ENCODE measurements at regions of chr12 and their contacts with region 1.

Region 1: DNA sequence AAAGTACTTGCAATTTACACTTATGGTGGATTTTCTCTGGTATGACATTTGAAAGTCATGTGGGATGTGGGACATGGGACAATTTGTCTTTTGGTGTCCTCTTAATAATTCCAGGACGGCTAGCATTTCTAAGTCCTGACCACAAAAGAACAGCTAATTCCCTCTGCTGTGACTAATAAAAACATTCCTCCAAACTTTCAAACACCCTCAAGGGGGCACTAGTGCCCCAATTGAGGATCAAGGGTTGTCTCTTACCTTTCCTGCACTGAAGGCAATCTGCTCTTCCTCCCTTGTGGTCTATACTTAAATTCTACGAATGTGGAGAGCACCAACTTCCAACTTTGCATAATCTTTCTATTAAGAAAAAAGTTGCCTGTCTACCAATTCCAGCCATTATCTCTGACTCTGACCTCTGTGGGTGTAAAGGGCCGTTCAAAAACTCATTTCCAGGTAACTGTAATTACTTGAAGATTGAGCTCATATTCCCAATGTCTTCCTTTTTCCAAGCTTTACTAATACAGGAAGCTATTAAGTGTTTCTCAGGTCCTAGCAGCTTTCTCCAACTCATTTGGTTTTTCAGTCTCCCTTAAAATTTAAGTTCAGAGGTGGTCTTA is 210.2 kb downstream of the PTPRO start:
- DNase-seq: peak; percentile 71
- H3K4me3 Mint-ChIP-seq: no peak overlapping the region
- H3K27ac Mint-ChIP-seq: no peak overlapping the region
- H3K4me1 Mint-ChIP-seq: no peaks in the 10 kb centered on the region
- H3K27me3 Mint-ChIP-seq: peaks cover 12% of the 10 kb centered on the region

Region 2: GRCh38 chr12:15546102-15546701 is 13.7 kb after region 1 on chr12:
- CTCF ChIA-PET with region 1: interaction called, 10 read pairs
- POLR2A ChIA-PET with region 1: no interaction called
- DNase-seq: peak; percentile 67
- H3K4me3 Mint-ChIP-seq: peak overlapping the region; percentile 40
- H3K27ac Mint-ChIP-seq: peak overlapping the region; percentile 97
- H3K4me1 Mint-ChIP-seq: peaks cover 56% of the 10 kb centered on the region
- H3K27me3 Mint-ChIP-seq: no peaks in the 10 kb centered on the region

Region 3: GRCh38 chr12:15575671-15576541 is 43.4 kb after region 1 on chr12:
- CTCF ChIA-PET with region 1: interaction called, 11 read pairs
- POLR2A ChIA-PET with region 1: interaction called, 3 read pairs
- DNase-seq: no peak
- H3K4me3 Mint-ChIP-seq: no peak overlapping the region
- H3K27ac Mint-ChIP-seq: peak overlapping the region; percentile 50
- H3K4me1 Mint-ChIP-seq: peaks cover 43% of the 10 kb centered on the region
- H3K27me3 Mint-ChIP-seq: no peaks in the 10 kb centered on the region

Region 4: DNA sequence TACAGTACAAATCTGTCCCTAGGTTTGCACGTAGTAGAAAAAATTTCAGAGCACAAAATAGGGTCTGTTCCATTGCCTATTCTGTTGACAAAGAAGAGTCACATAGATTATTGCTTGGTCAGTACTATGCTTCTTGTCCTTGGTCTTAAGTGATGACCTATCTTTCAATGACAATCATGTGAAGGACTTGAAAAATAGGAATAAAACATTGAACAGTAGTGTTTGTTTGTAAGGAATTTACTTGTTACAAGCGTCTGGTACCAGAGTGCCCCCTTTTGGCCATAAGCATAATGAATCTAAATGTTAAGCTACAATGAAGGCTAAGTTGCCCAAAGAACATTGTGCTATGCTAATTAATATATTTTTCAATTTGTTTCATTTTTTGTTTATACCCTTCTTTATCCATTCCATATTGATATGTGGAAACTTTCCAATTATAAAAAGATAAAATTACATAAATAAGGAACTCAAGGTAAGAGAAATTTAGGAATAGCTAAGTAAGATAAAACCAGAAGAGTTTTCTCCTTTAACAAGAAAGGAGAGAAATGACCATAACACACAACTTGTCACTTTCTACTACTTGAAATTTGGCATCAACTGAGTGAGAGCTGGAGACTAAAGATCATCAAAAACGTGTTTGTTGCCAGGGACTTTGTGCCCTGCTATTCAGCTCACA is 52.0 kb after region 1 on chr12:
- CTCF ChIA-PET with region 1: interaction called, 88 read pairs
- POLR2A ChIA-PET with region 1: interaction called, 4 read pairs
- DNase-seq: peak; percentile 62
- H3K4me3 Mint-ChIP-seq: no peak overlapping the region
- H3K27ac Mint-ChIP-seq: peak overlapping the region; percentile 72
- H3K4me1 Mint-ChIP-seq: peaks cover 30% of the 10 kb centered on the region
- H3K27me3 Mint-ChIP-seq: no peaks in the 10 kb centered on the region

Region 5: DNA sequence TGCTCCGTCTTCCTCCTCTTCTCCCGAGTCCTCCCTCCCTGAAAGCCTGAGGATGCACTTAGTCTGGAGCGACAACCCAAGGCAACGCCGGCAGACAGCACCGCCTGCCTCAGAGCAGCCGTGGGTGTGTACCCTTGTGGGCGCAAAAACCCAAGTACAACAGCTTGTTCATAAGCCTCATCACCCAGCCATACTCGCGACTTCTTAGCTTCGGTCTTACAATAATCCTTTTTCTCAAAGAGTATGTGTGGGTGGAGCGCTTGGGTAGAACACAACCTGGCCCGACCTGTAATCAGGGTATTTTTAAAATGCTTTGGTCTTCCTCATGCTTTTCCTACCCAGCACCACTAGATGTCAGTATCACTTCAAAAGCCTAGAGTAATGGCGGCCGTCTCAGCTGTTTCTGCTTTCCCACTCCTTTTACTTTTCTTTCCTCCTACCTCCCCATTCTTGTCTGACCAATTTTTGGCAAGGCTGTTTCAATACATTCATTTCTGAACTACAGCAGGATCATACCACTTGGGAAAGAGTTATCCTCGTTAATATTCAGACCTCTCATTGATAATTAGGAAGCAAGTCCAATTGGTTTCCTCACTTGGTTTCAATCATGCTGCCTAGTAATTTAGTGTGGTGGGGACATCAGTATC is 57.8 kb after region 1 on chr12:
- CTCF ChIA-PET with region 1: interaction called, 88 read pairs
- POLR2A ChIA-PET with region 1: no interaction called
- DNase-seq: peak; percentile 68
- H3K4me3 Mint-ChIP-seq: peak overlapping the region; percentile 44
- H3K27ac Mint-ChIP-seq: peak overlapping the region; percentile 3
- H3K4me1 Mint-ChIP-seq: peaks cover 12% of the 10 kb centered on the region
- H3K27me3 Mint-ChIP-seq: no peaks in the 10 kb centered on the region

Measured in activated CD4-positive, alpha-beta T cell treated with anti-CD3 and anti-CD28 coated beads, Interleukin-2, amount 10 ng/mL, durations not matched to agents 7 days and 5 days (primary cell).